Aorta (tissue), 5 donors: ENCODE measurements at regions of chr3 and their contacts with region 1.

Region 1: GRCh38 chr3:97197101-97197500 is 382.7 kb downstream of the EPHA6 start:
- DNase-seq: no peak
- ATAC-seq: no peak
- H3K4me3 ChIP-seq: no peak overlapping the region
- H3K27ac ChIP-seq: no peak overlapping the region
- H3K4me1 ChIP-seq: no peaks in the 10 kb centered on the region
- H3K27me3 ChIP-seq: no peaks in the 10 kb centered on the region

Region 2: GRCh38 chr3:97264180-97264579 is 67.1 kb after region 1 on chr3:
- intact Hi-C with region 1: no loop called
- DNase-seq: no peak
- ATAC-seq: no peak
- H3K4me3 ChIP-seq: no peak overlapping the region
- H3K27ac ChIP-seq: no peak overlapping the region
- H3K4me1 ChIP-seq: no peaks in the 10 kb centered on the region
- H3K27me3 ChIP-seq: no peaks in the 10 kb centered on the region

Region 3: DNA sequence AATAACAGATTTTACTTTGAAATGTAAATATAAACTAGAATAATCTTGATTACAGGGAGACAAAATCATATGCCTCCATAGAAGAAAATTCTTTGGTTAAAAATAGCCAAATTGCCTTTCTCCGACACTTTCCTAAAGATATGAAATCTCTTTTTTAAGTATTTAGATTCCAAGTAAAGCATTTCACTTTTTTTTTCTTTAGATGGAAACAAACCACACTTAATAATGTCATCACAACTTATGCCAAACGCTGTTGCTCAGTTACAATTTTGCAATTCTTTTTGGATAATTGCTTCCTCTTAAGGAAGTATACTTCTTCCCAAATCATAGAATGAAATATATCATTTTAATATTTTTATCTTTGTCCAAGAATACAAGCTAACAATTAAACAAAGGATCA is 273.4 kb after region 1 on chr3:
- intact Hi-C with region 1: loop called in 1 of 2 experiments (anchors 5 kb)
- DNase-seq: no peak
- ATAC-seq: no peak
- H3K4me3 ChIP-seq: no peak overlapping the region
- H3K27ac ChIP-seq: no peak overlapping the region
- H3K4me1 ChIP-seq: no peaks in the 10 kb centered on the region
- H3K27me3 ChIP-seq: no peaks in the 10 kb centered on the region